A673 (cell line): ENCODE measurements at regions of chr19 and their contacts with region 1.

Region 1: GRCh38 chr19:48492925-48493717 is 18.5 kb downstream of the LMTK3 start:
- DNase-seq: peak; percentile 98
- H3K4me3 ChIP-seq: peak overlapping the region; percentile 61
- H3K27ac ChIP-seq: peak overlapping the region; percentile 77
- H3K4me1 ChIP-seq: peaks cover 31% of the 10 kb centered on the region
- H3K27me3 ChIP-seq: no peaks in the 10 kb centered on the region
- CTCF ChIP-seq: no peak

Region 2: GRCh38 chr19:48321622-48322591 is 171.2 kb before region 1 on chr19:
- CTCF ChIA-PET with region 1: no interaction called
- POLR2A ChIA-PET with region 1: no interaction called
- intact Hi-C with region 1: loop called (anchors 5 kb)
- DNase-seq: peak; percentile 99
- H3K4me3 ChIP-seq: peak overlapping the region; percentile 57
- H3K27ac ChIP-seq: peak overlapping the region; percentile 97
- H3K4me1 ChIP-seq: peaks cover 51% of the 10 kb centered on the region
- H3K27me3 ChIP-seq: no peaks in the 10 kb centered on the region
- CTCF ChIP-seq: no peak

Region 3: DNA sequence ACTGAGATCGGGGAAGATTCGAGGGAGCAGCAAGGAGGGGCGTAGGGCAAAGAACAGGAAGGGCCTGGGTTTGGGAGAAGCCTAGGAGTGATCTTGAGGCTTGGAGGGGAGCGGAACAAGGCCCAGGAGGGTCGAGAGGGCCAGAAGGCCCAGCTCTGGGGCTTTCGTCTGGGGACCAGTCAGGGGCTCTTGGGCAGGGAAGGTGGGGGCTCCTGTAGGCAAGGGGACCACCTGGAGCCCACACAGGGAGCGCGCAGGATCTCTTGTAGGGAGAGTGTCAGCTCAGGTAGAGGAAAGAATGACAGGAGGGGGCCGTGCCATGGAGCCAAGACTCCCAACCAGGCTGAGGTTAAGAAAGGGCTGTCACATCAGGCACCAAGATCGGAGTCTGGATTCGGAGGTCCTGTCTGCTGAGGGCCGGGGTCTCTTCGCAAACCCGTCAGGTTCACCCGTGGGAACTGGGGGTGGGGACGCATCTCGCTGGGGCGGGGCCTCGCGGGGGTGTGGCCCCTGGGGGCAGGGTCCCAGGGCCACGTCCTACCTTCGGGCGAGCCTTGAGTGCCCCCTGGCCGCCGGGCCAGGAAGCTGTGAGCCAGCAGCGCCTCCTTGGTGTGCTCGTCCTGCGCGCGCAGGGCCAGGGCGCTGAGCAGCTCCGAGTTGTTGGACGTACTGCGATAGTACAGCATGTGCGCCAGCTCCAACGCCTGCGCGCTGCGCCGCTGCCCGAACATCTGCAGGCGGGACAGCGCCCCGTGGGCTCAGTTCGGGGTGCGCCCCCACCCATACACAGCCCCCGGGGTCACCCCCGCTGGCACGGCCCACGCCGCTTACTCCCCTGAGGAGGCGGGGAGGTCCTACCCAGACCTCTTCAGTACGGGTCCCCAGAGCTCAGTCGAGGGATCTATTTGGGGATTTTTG is 159.4 kb before region 1 on chr19:
- CTCF ChIA-PET with region 1: interaction called, 13 read pairs
- POLR2A ChIA-PET with region 1: no interaction called
- intact Hi-C with region 1: no loop called
- DNase-seq: peak; percentile 96
- H3K4me3 ChIP-seq: peak overlapping the region; percentile 56
- H3K27ac ChIP-seq: peak overlapping the region; percentile 91
- H3K4me1 ChIP-seq: peaks cover 15% of the 10 kb centered on the region
- H3K27me3 ChIP-seq: no peaks in the 10 kb centered on the region
- CTCF ChIP-seq: peak; percentile 91

Region 4: DNA sequence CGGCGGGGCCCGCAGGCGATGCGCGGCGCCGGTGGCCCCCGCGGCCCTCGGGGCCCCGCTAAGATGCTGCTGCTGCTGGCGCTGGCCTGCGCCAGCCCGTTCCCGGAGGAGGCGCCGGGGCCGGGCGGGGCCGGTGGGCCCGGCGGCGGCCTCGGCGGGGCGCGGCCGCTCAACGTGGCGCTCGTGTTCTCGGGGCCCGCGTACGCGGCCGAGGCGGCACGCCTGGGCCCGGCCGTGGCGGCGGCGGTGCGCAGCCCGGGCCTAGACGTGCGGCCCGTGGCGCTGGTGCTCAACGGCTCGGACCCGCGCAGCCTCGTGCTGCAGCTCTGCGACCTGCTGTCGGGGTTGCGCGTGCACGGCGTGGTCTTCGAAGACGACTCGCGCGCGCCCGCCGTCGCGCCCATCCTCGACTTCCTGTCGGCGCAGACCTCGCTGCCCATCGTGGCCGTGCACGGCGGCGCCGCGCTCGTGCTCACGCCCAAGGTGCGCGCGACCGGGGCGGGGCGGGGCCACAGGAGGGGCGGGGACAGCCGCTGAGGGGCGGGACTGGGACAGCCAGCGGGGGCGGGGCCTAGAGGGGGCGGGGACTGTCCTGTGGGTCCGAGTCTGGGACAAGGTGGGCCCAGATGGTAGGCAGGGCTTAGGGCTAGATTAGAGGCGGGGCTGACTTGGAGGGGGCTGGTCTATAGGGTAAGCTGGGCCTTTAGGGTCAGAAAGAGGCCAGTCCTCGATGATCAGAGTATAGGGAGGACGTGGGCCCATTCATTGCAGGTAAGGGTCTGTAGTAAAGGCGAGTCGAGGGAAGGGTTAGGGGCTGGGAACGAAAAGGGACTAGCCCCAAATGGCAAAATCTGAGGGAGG is 94.5 kb before region 1 on chr19:
- CTCF ChIA-PET with region 1: interaction called, 4 read pairs
- POLR2A ChIA-PET with region 1: interaction called, 10 read pairs
- intact Hi-C with region 1: no loop called
- DNase-seq: peak; percentile 93
- H3K4me3 ChIP-seq: peak overlapping the region; percentile 57
- H3K27ac ChIP-seq: peak overlapping the region; percentile 81
- H3K4me1 ChIP-seq: peaks cover 65% of the 10 kb centered on the region
- H3K27me3 ChIP-seq: no peaks in the 10 kb centered on the region
- CTCF ChIP-seq: no peak

Region 5: GRCh38 chr19:48419158-48419920 is 73.8 kb before region 1 on chr19:
- CTCF ChIA-PET with region 1: no interaction called
- POLR2A ChIA-PET with region 1: interaction called, 10 read pairs
- intact Hi-C with region 1: no loop called
- DNase-seq: peak; percentile 71
- H3K4me3 ChIP-seq: no peak overlapping the region
- H3K27ac ChIP-seq: no peak overlapping the region
- H3K4me1 ChIP-seq: peaks cover 10% of the 10 kb centered on the region
- H3K27me3 ChIP-seq: no peaks in the 10 kb centered on the region
- CTCF ChIP-seq: no peak

Region 6: GRCh38 chr19:48506138-48506733 is 13.1 kb after region 1 on chr19:
- CTCF ChIA-PET with region 1: interaction called, 10 read pairs
- POLR2A ChIA-PET with region 1: no interaction called
- intact Hi-C with region 1: no loop called
- DNase-seq: peak; percentile 78
- H3K4me3 ChIP-seq: no peak overlapping the region
- H3K27ac ChIP-seq: no peak overlapping the region
- H3K4me1 ChIP-seq: peaks cover 6% of the 10 kb centered on the region
- H3K27me3 ChIP-seq: no peaks in the 10 kb centered on the region
- CTCF ChIP-seq: peak; percentile 68

Region 7: GRCh38 chr19:48596679-48597465 is 103.8 kb after region 1 on chr19:
- CTCF ChIA-PET with region 1: no interaction called
- POLR2A ChIA-PET with region 1: interaction called, 10 read pairs
- intact Hi-C with region 1: no loop called
- DNase-seq: no peak
- H3K4me3 ChIP-seq: no peak overlapping the region
- H3K27ac ChIP-seq: no peak overlapping the region
- H3K4me1 ChIP-seq: no peaks in the 10 kb centered on the region
- H3K27me3 ChIP-seq: no peaks in the 10 kb centered on the region
- CTCF ChIP-seq: no peak